ENCODE measurements at regions of chr2 and their contacts with region 1.

Region 1: GRCh38 chr2:103959174-103960128 is 894.5 kb upstream of the POU3F3 start:
- DNase-seq: no peak
- ATAC-seq: no peak
- H3K4me3 Mint-ChIP-seq: no peak overlapping the region
- H3K27ac Mint-ChIP-seq: no peak overlapping the region
- H3K4me1 Mint-ChIP-seq: no peaks in the 10 kb centered on the region
- H3K27me3 Mint-ChIP-seq: no peaks in the 10 kb centered on the region
- CTCF ChIP-seq: peak; percentile 18

Region 2: GRCh38 chr2:104412384-104412783 is 452.9 kb after region 1 on chr2:
- CTCF ChIA-PET with region 1: no interaction called
- POLR2A ChIA-PET with region 1: no interaction called
- intact Hi-C with region 1: loop called (anchors 5 kb)
- DNase-seq: no peak
- ATAC-seq: no peak
- H3K4me3 Mint-ChIP-seq: no peak overlapping the region
- H3K27ac Mint-ChIP-seq: no peak overlapping the region
- H3K4me1 Mint-ChIP-seq: no peaks in the 10 kb centered on the region
- H3K27me3 Mint-ChIP-seq: peaks cover 2% of the 10 kb centered on the region
- CTCF ChIP-seq: no peak

Region 3: GRCh38 chr2:104658144-104658835 is 698.8 kb after region 1 on chr2:
- CTCF ChIA-PET with region 1: no interaction called
- POLR2A ChIA-PET with region 1: no interaction called
- intact Hi-C with region 1: no loop called
- DNase-seq: no peak
- ATAC-seq: no peak
- H3K4me3 Mint-ChIP-seq: no peak overlapping the region
- H3K27ac Mint-ChIP-seq: no peak overlapping the region
- H3K4me1 Mint-ChIP-seq: no peaks in the 10 kb centered on the region
- H3K27me3 Mint-ChIP-seq: peaks cover 12% of the 10 kb centered on the region
- CTCF ChIP-seq: no peak

Region 4: GRCh38 chr2:104849618-104850141 is 890.2 kb after region 1 on chr2:
- CTCF ChIA-PET with region 1: no interaction called
- POLR2A ChIA-PET with region 1: no interaction called
- intact Hi-C with region 1: loop called (anchors 5 kb)
- DNase-seq: no peak
- ATAC-seq: no peak
- H3K4me3 Mint-ChIP-seq: no peak overlapping the region
- H3K27ac Mint-ChIP-seq: peak overlapping the region; percentile 14
- H3K4me1 Mint-ChIP-seq: peaks cover 30% of the 10 kb centered on the region
- H3K27me3 Mint-ChIP-seq: peaks cover 84% of the 10 kb centered on the region
- CTCF ChIP-seq: no peak